Right ventricle myocardium inferior (tissue), 1 donor: ENCODE measurements at regions of chr2 and their contacts with region 1.

Region 1: DNA sequence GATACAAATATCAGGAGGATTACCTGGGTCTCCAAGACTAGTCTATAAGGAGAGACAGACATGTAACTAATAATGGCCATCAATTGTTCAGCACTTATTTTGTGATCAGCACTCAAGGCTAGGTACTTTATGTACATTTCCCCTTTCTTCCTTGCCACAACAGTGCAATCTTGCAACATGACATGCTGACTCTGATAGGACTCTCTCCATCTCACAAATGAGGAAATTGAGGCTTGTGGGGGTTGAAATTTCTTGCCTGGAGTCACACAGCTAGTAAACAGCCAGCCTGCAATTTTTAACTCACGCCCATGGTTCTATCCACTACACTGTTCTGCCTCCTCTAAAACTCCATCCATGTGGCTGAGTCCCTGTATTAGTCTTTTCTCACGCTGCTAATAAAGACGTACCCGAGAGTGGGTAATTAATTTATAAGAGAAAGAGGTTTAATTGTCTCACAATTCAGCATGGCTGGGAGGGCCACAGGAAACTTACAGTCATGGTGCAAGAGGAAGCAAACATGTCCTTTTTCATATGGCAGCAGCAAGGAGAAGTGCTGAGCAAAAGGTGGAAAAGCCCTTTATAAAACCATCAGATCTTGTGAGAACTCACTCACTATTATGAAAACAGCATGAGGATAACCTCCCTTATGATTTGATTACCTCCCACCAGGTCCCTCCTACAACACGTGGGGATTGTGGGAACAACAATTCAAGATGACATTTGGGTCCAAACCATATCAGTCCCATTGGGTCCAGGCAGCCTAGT is 302.4 kb downstream of the PLCL1 start:
- DNase-seq: no peak
- ATAC-seq: no peak

Region 2: GRCh38 chr2:197993830-197994229 is 113.0 kb before region 1 on chr2:
- intact Hi-C with region 1: no loop called
- DNase-seq: no peak
- ATAC-seq: no peak

Region 3: DNA sequence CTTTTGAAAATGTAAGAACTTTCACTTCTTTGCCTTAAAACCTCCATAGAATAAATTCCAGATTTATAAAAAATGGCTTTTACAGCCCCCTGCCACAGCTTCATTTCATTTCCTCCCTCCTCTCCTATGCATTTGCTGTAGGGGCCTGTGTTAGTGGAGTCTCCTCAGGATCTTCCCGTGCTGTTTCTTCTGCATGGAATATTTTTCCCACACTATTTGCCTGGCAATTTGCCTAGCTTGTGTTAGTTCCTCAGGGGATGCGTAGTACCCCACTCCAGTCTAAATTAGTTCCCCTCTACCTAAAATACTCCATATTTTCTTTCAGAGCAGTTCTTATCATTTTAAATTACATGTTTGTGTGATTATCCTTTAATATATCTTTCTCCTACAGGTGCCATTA is 40.2 kb before region 1 on chr2:
- intact Hi-C with region 1: loop called (anchors 5 kb)
- DNase-seq: no peak
- ATAC-seq: peak; percentile 26